Activated CD8-positive, alpha-beta memory T cell treated with anti-CD3 and anti-CD28 coated beads, Interleukin-2, amount 10 ng/mL, durations not matched to agents 7 days and 5 days (primary cell): ENCODE measurements at regions of chr15 and their contacts with region 1.

Region 1: DNA sequence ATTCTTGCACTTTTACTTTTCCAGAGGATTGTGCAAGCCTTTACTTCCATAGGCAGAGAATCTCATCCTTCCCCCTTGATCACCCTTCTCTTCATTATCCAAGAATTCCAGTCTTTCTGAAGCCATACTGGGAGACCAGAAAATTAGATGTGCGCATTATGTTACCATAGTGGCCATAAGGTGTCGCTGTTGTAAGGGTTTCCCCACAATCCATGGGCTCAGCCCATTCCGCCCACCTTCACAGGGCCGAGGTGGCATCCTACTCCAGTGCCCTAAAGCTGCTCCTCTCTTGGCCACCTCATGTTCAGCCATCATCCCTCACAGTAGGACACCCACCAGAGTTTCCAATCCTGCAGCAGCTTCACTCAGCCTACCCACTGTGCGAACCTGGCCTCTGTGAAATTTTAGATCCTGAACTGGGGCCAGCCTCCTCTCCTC is 35.0 kb downstream of the CTSH start:
- DNase-seq: no peak
- ATAC-seq: peak; percentile 52
- H3K4me3 Mint-ChIP-seq: no peak overlapping the region
- H3K27ac Mint-ChIP-seq: no peak overlapping the region
- H3K4me1 Mint-ChIP-seq: peaks cover 36% of the 10 kb centered on the region
- H3K27me3 Mint-ChIP-seq: no peaks in the 10 kb centered on the region

Region 2: GRCh38 chr15:78895471-78895870 is 14.3 kb before region 1 on chr15:
- CTCF ChIA-PET with region 1: interaction called, 10 read pairs
- DNase-seq: no peak
- ATAC-seq: no peak
- H3K4me3 Mint-ChIP-seq: no peak overlapping the region
- H3K27ac Mint-ChIP-seq: peak overlapping the region; percentile 27
- H3K4me1 Mint-ChIP-seq: peaks cover 7% of the 10 kb centered on the region
- H3K27me3 Mint-ChIP-seq: no peaks in the 10 kb centered on the region

Region 3: GRCh38 chr15:78951841-78952238 is 42.0 kb after region 1 on chr15:
- CTCF ChIA-PET with region 1: no interaction called
- DNase-seq: no peak
- ATAC-seq: no peak
- H3K4me3 Mint-ChIP-seq: no peak overlapping the region
- H3K27ac Mint-ChIP-seq: no peak overlapping the region
- H3K4me1 Mint-ChIP-seq: peaks cover 9% of the 10 kb centered on the region
- H3K27me3 Mint-ChIP-seq: peaks cover 9% of the 10 kb centered on the region

Region 4: DNA sequence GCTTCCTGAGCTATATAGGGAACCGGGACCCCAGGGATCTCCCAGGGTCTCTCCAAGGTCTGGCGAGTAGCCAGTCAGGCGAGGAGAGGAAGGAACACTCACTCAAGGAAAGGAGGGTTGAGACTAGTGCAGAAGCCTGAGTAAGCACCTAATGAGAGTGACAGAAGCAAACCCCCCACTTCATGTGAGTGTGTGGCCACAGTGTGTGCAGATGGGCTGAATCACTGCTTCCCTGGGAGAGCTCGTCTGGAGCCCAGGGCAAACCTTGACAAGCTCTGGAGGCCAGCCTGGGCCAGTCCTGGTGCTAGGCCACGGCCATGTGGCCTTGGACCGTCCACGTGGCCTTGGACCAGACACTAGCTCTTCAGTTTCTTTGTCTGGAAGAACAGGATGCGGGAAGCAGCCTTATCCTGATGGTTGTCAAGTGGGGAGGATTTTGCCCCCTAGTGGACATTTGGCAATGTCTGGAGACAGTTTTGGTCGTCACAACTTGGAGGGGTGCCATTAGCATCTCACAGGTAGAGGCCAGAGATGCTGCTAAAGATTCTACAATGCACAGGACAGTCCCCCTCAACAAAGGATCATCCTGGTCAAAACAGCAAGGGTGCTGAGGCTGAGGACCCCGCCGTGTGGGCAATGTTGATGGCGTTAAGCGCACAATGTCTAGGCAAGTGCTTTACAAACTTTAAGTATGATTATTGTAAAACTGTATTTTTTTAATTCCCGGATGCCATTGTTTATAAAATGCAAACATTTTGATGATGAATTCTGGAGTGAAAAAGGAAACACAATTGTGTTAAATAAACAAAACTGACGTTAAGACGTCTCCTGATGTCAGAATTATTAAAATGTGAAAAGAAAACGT is 69.9 kb after region 1 on chr15:
- CTCF ChIA-PET with region 1: interaction called, 10 read pairs
- DNase-seq: no peak
- ATAC-seq: peak; percentile 61
- H3K4me3 Mint-ChIP-seq: no peak overlapping the region
- H3K27ac Mint-ChIP-seq: no peak overlapping the region
- H3K4me1 Mint-ChIP-seq: peaks cover 11% of the 10 kb centered on the region
- H3K27me3 Mint-ChIP-seq: peaks cover 2% of the 10 kb centered on the region

Region 5: GRCh38 chr15:79007066-79007465 is 97.3 kb after region 1 on chr15:
- CTCF ChIA-PET with region 1: interaction called, 32 read pairs
- DNase-seq: peak; percentile 77
- ATAC-seq: peak; percentile 71
- H3K4me3 Mint-ChIP-seq: no peak overlapping the region
- H3K27ac Mint-ChIP-seq: no peak overlapping the region
- H3K4me1 Mint-ChIP-seq: peaks cover 13% of the 10 kb centered on the region
- H3K27me3 Mint-ChIP-seq: peaks cover 6% of the 10 kb centered on the region

Region 6: GRCh38 chr15:79184465-79184892 is 274.7 kb after region 1 on chr15:
- CTCF ChIA-PET with region 1: interaction called, 10 read pairs
- DNase-seq: peak; percentile 69
- ATAC-seq: peak; percentile 36
- H3K4me3 Mint-ChIP-seq: no peak overlapping the region
- H3K27ac Mint-ChIP-seq: no peak overlapping the region
- H3K4me1 Mint-ChIP-seq: no peaks in the 10 kb centered on the region
- H3K27me3 Mint-ChIP-seq: peaks cover 9% of the 10 kb centered on the region